SK-N-SH (cell line): ENCODE measurements at regions of chr17 and their contacts with region 1.

Region 1: GRCh38 chr17:76585818-76586593 is at the start of gene ST6GALNAC2:
- DNase-seq: peak; percentile 94
- H3K4me3 ChIP-seq: peak within 1 kb of the TSS; percentile 46 to 57
- H3K27ac ChIP-seq: no peak within 1 kb of the TSS
- H3K4me1 ChIP-seq: peaks cover 0 to 9% of the 10 kb centered on the region in 2 experiments; a peak in 1 of 4 replicates
- H3K27me3 ChIP-seq: peaks cover 37% of the 10 kb centered on the region
- CTCF ChIP-seq: peak; percentile 38
- EP300 ChIP-seq: no peak
- RAD21 ChIP-seq: peak; percentile 65
- polyA plus RNA-seq, gene ST6GALNAC2: 0.57 and 0.94 TPM in 2 replicates

Region 2: DNA sequence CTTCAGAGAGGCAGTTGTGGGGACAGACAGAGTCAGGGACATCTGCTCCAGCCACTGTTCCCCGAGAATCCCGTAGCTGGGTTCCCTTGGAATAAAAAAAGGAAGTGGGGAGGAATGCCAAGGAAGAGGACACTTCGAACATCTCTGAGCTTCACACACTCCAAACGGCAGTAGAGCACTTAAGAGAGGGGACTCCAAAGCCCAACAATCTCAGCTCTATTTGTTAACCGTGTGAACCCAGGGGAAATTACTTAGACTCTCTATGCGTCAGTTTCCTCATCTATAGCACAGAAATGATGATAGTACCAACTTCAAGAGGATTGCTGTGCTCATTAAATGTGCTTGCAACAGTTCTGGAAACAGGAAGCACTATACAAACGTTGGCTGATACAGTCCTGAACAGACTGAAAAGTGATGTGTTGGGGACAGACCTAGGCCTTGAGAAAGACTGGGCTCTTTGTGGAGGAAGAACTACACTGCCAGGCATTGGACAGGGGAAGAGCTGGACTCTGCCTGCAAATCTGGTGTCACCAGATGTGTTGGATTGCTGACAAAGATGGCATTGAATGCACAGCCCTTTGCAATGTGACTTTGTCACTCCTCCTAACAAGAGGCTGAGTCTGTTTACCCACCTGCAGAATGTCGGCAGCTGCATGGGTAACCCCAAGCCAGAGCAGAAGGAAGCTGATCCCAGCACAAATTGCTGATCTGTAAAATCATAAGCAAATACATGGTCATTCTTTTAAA is 11.9 kb after region 1 on chr17:
- CTCF ChIA-PET with region 1: interaction called, 11 read pairs
- POLR2A ChIA-PET with region 1: interaction called, 3 read pairs
- DNase-seq: no peak
- H3K4me3 ChIP-seq: no peak overlapping the region
- H3K27ac ChIP-seq: no peak overlapping the region
- H3K4me1 ChIP-seq: peaks cover 0 to 6% of the 10 kb centered on the region in 2 experiments; a peak in 2 of 4 replicates
- H3K27me3 ChIP-seq: no peaks in the 10 kb centered on the region
- CTCF ChIP-seq: no peak
- EP300 ChIP-seq: no peak
- RAD21 ChIP-seq: no peak

Region 3: GRCh38 chr17:76612977-76613851 is 27.2 kb after region 1 on chr17:
- CTCF ChIA-PET with region 1: interaction called, 16 read pairs
- POLR2A ChIA-PET with region 1: no interaction called
- DNase-seq: no peak
- H3K4me3 ChIP-seq: no peak overlapping the region
- H3K27ac ChIP-seq: no peak overlapping the region
- H3K4me1 ChIP-seq: no peaks in the 10 kb centered on the region; a peak in 1 of 4 replicates
- H3K27me3 ChIP-seq: no peaks in the 10 kb centered on the region; the same call in 1 of the 2 replicates
- CTCF ChIP-seq: no peak
- EP300 ChIP-seq: no peak
- RAD21 ChIP-seq: no peak